ENCODE measurements at regions of chr2 and their contacts with region 1.

Region 1: DNA sequence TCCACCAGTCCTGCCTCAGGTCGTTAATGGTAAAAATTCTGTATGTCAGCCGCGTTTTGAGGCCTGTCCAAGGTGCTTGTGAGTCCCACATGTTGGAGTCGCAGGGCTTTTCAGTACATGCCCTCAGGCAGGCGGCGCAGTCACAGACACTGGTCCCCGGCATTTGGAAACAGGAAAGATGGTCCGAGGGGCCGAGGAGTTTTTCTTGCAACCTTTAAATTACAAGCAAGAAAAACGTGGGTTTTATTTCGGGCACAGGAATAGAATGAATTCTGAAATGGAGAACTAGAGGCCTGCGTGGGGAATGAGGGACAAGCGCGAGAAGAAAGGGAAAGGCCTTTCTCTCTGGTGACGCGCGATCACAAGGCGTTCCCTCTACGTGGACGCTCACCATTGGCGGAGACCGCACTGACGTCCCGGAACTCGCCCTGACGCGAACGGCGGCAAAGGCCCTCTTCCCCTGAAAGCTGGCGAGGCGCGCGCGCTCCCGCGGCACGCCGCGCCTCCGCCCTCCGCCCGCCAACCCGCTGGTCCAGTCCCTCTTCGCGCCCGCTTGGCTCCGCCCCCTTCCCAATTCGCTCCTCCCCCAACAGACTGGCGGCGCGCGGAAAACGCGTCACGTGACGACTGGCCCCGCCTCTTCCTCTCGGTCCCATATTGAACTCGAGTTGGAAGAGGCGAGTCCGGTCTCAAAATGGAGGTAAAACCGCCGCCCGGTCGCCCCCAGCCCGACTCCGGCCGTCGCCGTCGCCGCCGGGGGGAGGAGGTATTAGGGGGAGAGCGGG is at the start of gene HNRNPA3:
- DNase-seq: peak; percentile 98 to 100 (median 98)
- ATAC-seq: peak; percentile 88
- H3K4me3 ChIP-seq: peak within 1 kb of the TSS; percentile 90
- H3K27ac ChIP-seq: peak within 1 kb of the TSS; percentile 99
- H3K4me1 ChIP-seq: peaks cover 5 to 7% of the 10 kb centered on the region in 2 experiments; a peak in 4 of 5 replicates
- H3K27me3 ChIP-seq: no peaks in the 10 kb centered on the region
- CTCF ChIP-seq: peak in 2 of 3 experiments; percentile 27 to 47; a peak in 4 of 6 replicates
- EP300 ChIP-seq: no peak
- POLR2A ChIP-seq: peak; percentile 99
- RAD21 ChIP-seq: peak in 1 of 2 experiments; percentile 39; a peak in 2 of 4 replicates
- polyA plus RNA-seq, gene HNRNPA3: 108 to 192 TPM

Region 2: GRCh38 chr2:176978921-176979320 is 233.4 kb before region 1 on chr2:
- CTCF ChIA-PET with region 1: no interaction called
- POLR2A ChIA-PET with region 1: no interaction called
- in situ Hi-C with region 1: no loop called
- intact Hi-C with region 1: no loop called
- DNase-seq: no peak
- ATAC-seq: no peak
- H3K4me3 ChIP-seq: no peak overlapping the region
- H3K27ac ChIP-seq: no peak overlapping the region
- H3K4me1 ChIP-seq: no peaks in the 10 kb centered on the region
- H3K27me3 ChIP-seq: 0 out of 5 replicates have a peak, but pooled peaks cover 0 to 4% of the 10 kb centered on the region in 2 experiments
- CTCF ChIP-seq: peak in 1 of 3 experiments; percentile 33; a peak in 1 of 6 replicates
- EP300 ChIP-seq: no peak
- POLR2A ChIP-seq: no peak
- RAD21 ChIP-seq: peak; percentile 20 to 24; a peak in 1 of 4 replicates

Region 3: DNA sequence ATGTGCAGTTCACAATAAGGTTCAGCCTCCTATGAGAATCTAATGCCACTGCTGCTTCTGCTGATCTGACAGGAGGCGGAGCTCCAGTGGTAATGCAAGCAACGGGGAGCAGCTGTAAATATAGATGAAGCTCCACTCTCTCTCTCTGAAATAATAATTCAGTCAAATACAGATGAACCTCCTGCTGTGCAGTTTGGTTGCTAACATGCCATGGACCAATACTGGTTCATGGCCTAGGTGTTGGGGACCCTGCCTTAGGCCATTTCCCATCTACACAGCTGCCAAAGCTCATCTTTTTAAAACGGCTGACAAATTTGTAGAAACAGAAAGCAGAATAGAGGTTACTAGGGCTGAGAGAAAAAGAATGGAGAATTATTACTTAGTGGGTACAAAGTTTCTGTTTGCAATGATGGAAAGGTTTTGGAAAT is 10.4 kb before region 1 on chr2:
- CTCF ChIA-PET with region 1: no interaction called
- POLR2A ChIA-PET with region 1: interaction called, 33 read pairs
- in situ Hi-C with region 1: no loop called
- intact Hi-C with region 1: no loop called
- DNase-seq: no peak
- ATAC-seq: peak; percentile 34; the same call in 2 of the 3 replicates
- H3K4me3 ChIP-seq: no peak overlapping the region
- H3K27ac ChIP-seq: no peak overlapping the region
- H3K4me1 ChIP-seq: peaks cover 0 to 6% of the 10 kb centered on the region in 2 experiments; a peak in 1 of 5 replicates
- H3K27me3 ChIP-seq: no peaks in the 10 kb centered on the region
- CTCF ChIP-seq: no peak
- EP300 ChIP-seq: no peak
- POLR2A ChIP-seq: no peak
- RAD21 ChIP-seq: no peak

Region 4: GRCh38 chr2:177229448-177230242 is 17.3 kb after region 1 on chr2:
- CTCF ChIA-PET with region 1: no interaction called
- POLR2A ChIA-PET with region 1: interaction called, 23 read pairs
- in situ Hi-C with region 1: no loop called
- intact Hi-C with region 1: no loop called
- DNase-seq: no peak
- ATAC-seq: peak; percentile 32
- H3K4me3 ChIP-seq: no peak overlapping the region
- H3K27ac ChIP-seq: no peak overlapping the region
- H3K4me1 ChIP-seq: peaks cover 0 to 2% of the 10 kb centered on the region in 2 experiments; a peak in 2 of 5 replicates
- H3K27me3 ChIP-seq: no peaks in the 10 kb centered on the region
- CTCF ChIP-seq: no peak
- EP300 ChIP-seq: no peak
- POLR2A ChIP-seq: peak; percentile 60
- RAD21 ChIP-seq: no peak

Region 5: DNA sequence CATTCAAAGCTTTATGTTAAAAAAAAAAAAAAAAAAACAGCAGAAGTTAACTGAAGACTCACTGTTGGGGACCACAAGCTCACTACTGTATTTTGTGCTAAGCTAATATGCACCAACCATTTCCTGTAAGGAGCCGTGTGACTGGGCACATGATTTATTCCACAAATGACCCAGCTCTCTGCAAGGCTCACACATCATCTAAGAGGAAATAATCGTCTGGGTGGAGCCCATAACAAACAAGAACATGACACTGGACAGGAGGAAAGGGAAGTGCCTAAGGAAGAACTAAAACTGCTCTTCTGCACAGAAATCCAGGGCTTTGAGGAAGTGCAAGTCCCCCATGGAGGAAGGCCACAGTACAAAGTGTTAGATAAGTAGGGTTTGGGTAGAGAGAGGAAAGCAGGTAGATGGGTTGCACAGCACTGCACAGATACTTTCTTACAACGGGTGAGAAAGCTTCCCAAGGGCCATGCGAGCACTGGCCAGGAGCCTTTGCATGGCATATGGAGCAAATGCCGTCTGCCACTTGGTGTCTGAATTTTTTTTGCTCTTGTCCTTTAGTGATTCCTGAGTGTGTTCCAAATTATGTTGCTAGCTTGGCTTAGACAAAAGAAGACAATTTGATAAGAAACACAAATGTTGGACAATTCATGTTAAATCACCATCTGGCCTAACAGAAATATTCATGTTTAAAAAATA is 27.8 kb after region 1 on chr2:
- CTCF ChIA-PET with region 1: no interaction called
- POLR2A ChIA-PET with region 1: interaction called, 7 read pairs
- in situ Hi-C with region 1: no loop called
- intact Hi-C with region 1: loop called (anchors 2 kb)
- DNase-seq: no peak
- ATAC-seq: peak; percentile 5
- H3K4me3 ChIP-seq: no peak overlapping the region
- H3K27ac ChIP-seq: peak overlapping the region; percentile 26; the same call in 2 of the 3 replicates
- H3K4me1 ChIP-seq: peaks cover 18 to 44% of the 10 kb centered on the region in 2 experiments
- H3K27me3 ChIP-seq: no peaks in the 10 kb centered on the region
- CTCF ChIP-seq: no peak
- EP300 ChIP-seq: no peak
- POLR2A ChIP-seq: no peak
- RAD21 ChIP-seq: no peak

Region 6: DNA sequence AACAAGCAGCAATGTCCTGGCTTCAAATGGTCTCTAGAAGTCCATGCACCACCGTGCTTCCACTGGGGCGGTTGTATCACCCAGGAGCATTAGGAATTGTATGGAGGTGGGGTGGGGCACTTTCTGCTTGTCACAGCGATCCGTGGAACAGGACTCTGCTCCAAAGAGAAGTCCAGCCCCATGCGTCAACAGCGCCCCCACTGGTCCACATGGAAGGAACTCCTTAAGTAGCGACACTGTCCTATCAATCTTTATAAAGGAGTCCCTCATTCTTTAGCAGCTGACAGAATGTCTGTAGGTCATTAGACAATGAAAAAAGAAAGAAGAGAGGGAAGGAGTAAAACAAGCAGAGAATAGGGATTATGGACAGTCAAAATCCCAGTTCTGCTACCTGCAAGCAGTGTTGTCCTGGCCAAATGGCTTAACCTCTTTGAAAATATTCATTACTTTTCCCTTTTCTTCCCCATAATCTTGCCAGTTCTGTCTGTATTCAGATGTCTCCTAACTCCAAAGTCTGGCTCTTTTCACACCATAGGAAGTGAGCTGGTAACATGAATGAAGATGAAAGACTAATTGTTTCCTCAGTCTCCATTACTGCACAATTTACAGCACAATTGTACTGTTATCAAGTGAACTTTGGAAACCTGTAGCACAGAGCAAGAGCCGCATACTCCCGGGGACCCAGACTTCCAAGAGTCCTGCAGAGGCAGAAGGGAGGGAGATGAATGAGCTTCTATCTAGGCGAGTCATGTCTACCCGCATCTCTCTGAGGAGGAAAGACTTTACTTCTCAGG is 42.3 kb after region 1 on chr2:
- CTCF ChIA-PET with region 1: no interaction called
- POLR2A ChIA-PET with region 1: interaction called, 5 read pairs
- in situ Hi-C with region 1: no loop called
- intact Hi-C with region 1: loop called (anchors 2 kb)
- DNase-seq: peak; percentile 69 to 93 (median 73)
- ATAC-seq: peak; percentile 81
- H3K4me3 ChIP-seq: 0 out of 2 replicates have a peak overlapping the region, but pooled peaks have one; percentile 4
- H3K27ac ChIP-seq: peak overlapping the region; percentile 59
- H3K4me1 ChIP-seq: peaks cover 35 to 79% of the 10 kb centered on the region in 2 experiments
- H3K27me3 ChIP-seq: no peaks in the 10 kb centered on the region
- CTCF ChIP-seq: peak; percentile 88 to 98 (median 96)
- EP300 ChIP-seq: no peak
- POLR2A ChIP-seq: no peak
- RAD21 ChIP-seq: peak; percentile 62 to 81

Region 7: GRCh38 chr2:177400337-177400923 is 188.1 kb after region 1 on chr2:
- CTCF ChIA-PET with region 1: no interaction called
- POLR2A ChIA-PET with region 1: no interaction called
- in situ Hi-C with region 1: no loop called
- intact Hi-C with region 1: no loop called
- DNase-seq: no peak
- ATAC-seq: no peak
- H3K4me3 ChIP-seq: no peak overlapping the region
- H3K27ac ChIP-seq: no peak overlapping the region
- H3K4me1 ChIP-seq: peaks cover 0 to 39% of the 10 kb centered on the region in 2 experiments; a peak in 4 of 5 replicates
- H3K27me3 ChIP-seq: no peaks in the 10 kb centered on the region
- CTCF ChIP-seq: no peak
- EP300 ChIP-seq: no peak
- POLR2A ChIP-seq: no peak
- RAD21 ChIP-seq: no peak

Measured in K562 (cell line).